GM12878 (cell line): ENCODE measurements at regions of chr4 and their contacts with region 1.

Region 1: GRCh38 chr4:161252520-161253141 is 911.2 kb downstream of the FSTL5 start:
- DNase-seq: peak; percentile 15
- ATAC-seq: peak; percentile 81
- H3K4me3 ChIP-seq: no peak overlapping the region
- H3K27ac ChIP-seq: no peak overlapping the region
- H3K4me1 ChIP-seq: no peaks in the 10 kb centered on the region
- H3K27me3 ChIP-seq: no peaks in the 10 kb centered on the region
- CTCF ChIP-seq: peak; percentile 89 to 92 (median 91)
- EP300 ChIP-seq: no peak
- POLR2A ChIP-seq: no peak
- RAD21 ChIP-seq: peak; percentile 80

Region 2: GRCh38 chr4:161320377-161320776 is 67.7 kb after region 1 on chr4:
- CTCF ChIA-PET with region 1: interaction called, 10 read pairs
- POLR2A ChIA-PET with region 1: no interaction called
- RAD21 ChIA-PET with region 1: interaction called, 4 read pairs
- SMC1A ChIA-PET with region 1: interaction called, 6 read pairs
- in situ Hi-C with region 1: no loop called
- intact Hi-C with region 1: loop called (anchors 1 kb)
- DNase-seq: no peak
- ATAC-seq: peak; percentile 98
- H3K4me3 ChIP-seq: no peak overlapping the region
- H3K27ac ChIP-seq: no peak overlapping the region
- H3K4me1 ChIP-seq: no peaks in the 10 kb centered on the region
- H3K27me3 ChIP-seq: no peaks in the 10 kb centered on the region
- CTCF ChIP-seq: peak; percentile 64 to 71 (median 64)
- EP300 ChIP-seq: no peak
- POLR2A ChIP-seq: no peak
- RAD21 ChIP-seq: peak; percentile 65

Region 3: GRCh38 chr4:161555689-161556660 is 303.3 kb after region 1 on chr4:
- CTCF ChIA-PET with region 1: interaction called, 12 read pairs
- POLR2A ChIA-PET with region 1: no interaction called
- RAD21 ChIA-PET with region 1: no interaction called
- SMC1A ChIA-PET with region 1: interaction called, 6 read pairs
- in situ Hi-C with region 1: no loop called
- intact Hi-C with region 1: loop called (anchors 5 kb)
- DNase-seq: peak; percentile 88
- ATAC-seq: peak; percentile 91
- H3K4me3 ChIP-seq: no peak overlapping the region
- H3K27ac ChIP-seq: peak overlapping the region; percentile 64
- H3K4me1 ChIP-seq: peaks cover 6% of the 10 kb centered on the region; the same call in 1 of the 2 replicates
- H3K27me3 ChIP-seq: no peaks in the 10 kb centered on the region
- CTCF ChIP-seq: no peak
- EP300 ChIP-seq: peak; percentile 66 to 95; a peak in 3 of 4 replicates
- POLR2A ChIP-seq: no peak
- RAD21 ChIP-seq: no peak

Region 4: DNA sequence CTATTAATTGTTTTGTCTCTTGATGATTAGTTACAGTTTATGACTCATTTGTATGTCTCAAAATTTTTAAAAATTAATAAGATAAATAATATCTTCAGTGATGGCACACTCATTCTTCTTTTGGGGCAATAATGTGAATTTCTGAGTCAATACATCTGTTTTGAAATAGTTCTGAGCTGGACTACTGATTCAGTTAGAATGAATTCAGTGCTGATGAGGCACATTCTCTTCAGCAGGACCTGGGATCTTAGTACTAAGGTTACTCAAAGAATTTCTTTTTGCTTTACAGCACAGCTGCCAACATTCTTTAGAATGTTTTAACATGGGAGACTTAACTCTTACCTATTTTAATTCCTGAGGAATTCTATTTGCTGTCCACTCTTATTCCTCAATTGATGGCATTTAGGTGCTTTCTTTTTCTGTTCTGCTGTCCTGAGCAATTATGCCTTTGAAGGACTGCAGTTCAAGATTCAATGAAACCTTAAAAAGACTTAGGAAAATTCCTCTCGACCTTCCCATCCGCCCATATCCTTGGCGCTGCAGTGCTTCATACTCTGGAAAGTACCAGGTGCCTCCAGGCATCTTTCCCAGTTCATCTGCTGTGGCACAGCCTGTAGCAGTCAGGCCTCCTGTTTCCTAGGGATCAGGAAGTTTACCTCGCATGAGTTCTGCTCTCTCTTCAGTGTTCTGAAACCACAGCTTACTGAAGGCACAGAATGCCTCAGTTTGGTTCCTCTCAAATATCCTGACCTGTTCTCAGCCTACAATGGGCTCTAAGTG is 697.5 kb after region 1 on chr4:
- CTCF ChIA-PET with region 1: interaction called, 22 read pairs
- POLR2A ChIA-PET with region 1: no interaction called
- RAD21 ChIA-PET with region 1: interaction called, 40 read pairs
- SMC1A ChIA-PET with region 1: interaction called, 24 read pairs
- in situ Hi-C with region 1: loop called (anchors 25 kb)
- intact Hi-C with region 1: loop called (anchors 2 kb)
- DNase-seq: no peak
- ATAC-seq: no peak
- H3K4me3 ChIP-seq: no peak overlapping the region
- H3K27ac ChIP-seq: no peak overlapping the region
- H3K4me1 ChIP-seq: no peaks in the 10 kb centered on the region
- H3K27me3 ChIP-seq: no peaks in the 10 kb centered on the region
- CTCF ChIP-seq: no peak
- EP300 ChIP-seq: no peak
- POLR2A ChIP-seq: no peak
- RAD21 ChIP-seq: no peak